CD4-positive, alpha-beta T cell (primary cell): ENCODE measurements at regions of chr20 and their contacts with region 1.

Region 1: GRCh38 chr20:3156811-3157619 is 2.6 kb downstream of the FASTKD5 start:
- DNase-seq: peak in 4 of 14 experiments; percentile 30 to 71 (median 61)
- ATAC-seq: peak; percentile 85
- H3K4me3 ChIP-seq: peak overlapping the region; percentile 97
- H3K4me3 Mint-ChIP-seq: peak overlapping the region; percentile 87
- H3K27ac ChIP-seq: peak overlapping the region; percentile 47 to 48
- H3K27ac Mint-ChIP-seq: peak overlapping the region; percentile 94
- H3K4me1 ChIP-seq: peaks cover 46% of the 10 kb centered on the region
- H3K4me1 Mint-ChIP-seq: peaks cover 75% of the 10 kb centered on the region
- H3K27me3 ChIP-seq: no peaks in the 10 kb centered on the region
- H3K27me3 Mint-ChIP-seq: no peaks in the 10 kb centered on the region
- CTCF ChIP-seq: no peak

Region 2: GRCh38 chr20:2911200-2911599 is 245.8 kb before region 1 on chr20:
- CTCF ChIA-PET with region 1: no interaction called
- POLR2A ChIA-PET with region 1: no interaction called
- intact Hi-C with region 1: no loop called
- DNase-seq: no peak
- ATAC-seq: no peak
- H3K4me3 ChIP-seq: no peak overlapping the region
- H3K4me3 Mint-ChIP-seq: no peak overlapping the region
- H3K27ac ChIP-seq: no peak overlapping the region
- H3K27ac Mint-ChIP-seq: no peak overlapping the region
- H3K4me1 ChIP-seq: no peaks in the 10 kb centered on the region
- H3K4me1 Mint-ChIP-seq: peaks cover 22% of the 10 kb centered on the region
- H3K27me3 ChIP-seq: no peaks in the 10 kb centered on the region
- H3K27me3 Mint-ChIP-seq: no peaks in the 10 kb centered on the region
- CTCF ChIP-seq: no peak

Region 3: GRCh38 chr20:3082306-3082951 is 74.6 kb before region 1 on chr20:
- CTCF ChIA-PET with region 1: no interaction called
- POLR2A ChIA-PET with region 1: interaction called, 13 read pairs
- intact Hi-C with region 1: loop called in 1 of 2 experiments (anchors 5 kb)
- DNase-seq: peak in 3 of 14 experiments; percentile 28 to 44 (median 34)
- ATAC-seq: peak; percentile 62
- H3K4me3 ChIP-seq: peak overlapping the region; percentile 30
- H3K4me3 Mint-ChIP-seq: peak overlapping the region; percentile 78
- H3K27ac ChIP-seq: no peak overlapping the region
- H3K27ac Mint-ChIP-seq: no peak overlapping the region
- H3K4me1 ChIP-seq: peaks cover 18% of the 10 kb centered on the region
- H3K4me1 Mint-ChIP-seq: peaks cover 18% of the 10 kb centered on the region
- H3K27me3 ChIP-seq: peaks cover 26 to 32% of the 10 kb centered on the region in 2 experiments
- H3K27me3 Mint-ChIP-seq: peaks cover 45% of the 10 kb centered on the region
- CTCF ChIP-seq: no peak

Region 4: GRCh38 chr20:3121271-3121911 is 35.6 kb before region 1 on chr20:
- CTCF ChIA-PET with region 1: interaction called, 8 read pairs
- POLR2A ChIA-PET with region 1: interaction called, 8 read pairs
- intact Hi-C with region 1: loop called (anchors 2 to 5 kb)
- DNase-seq: peak in 13 of 14 experiments; percentile 18 to 74 (median 36)
- ATAC-seq: peak; percentile 72
- H3K4me3 ChIP-seq: peak overlapping the region; percentile 2
- H3K4me3 Mint-ChIP-seq: peak overlapping the region; percentile 83
- H3K27ac ChIP-seq: peak overlapping the region; percentile 68 to 70
- H3K27ac Mint-ChIP-seq: peak overlapping the region; percentile 99
- H3K4me1 ChIP-seq: peaks cover 42% of the 10 kb centered on the region
- H3K4me1 Mint-ChIP-seq: peaks cover 50% of the 10 kb centered on the region
- H3K27me3 ChIP-seq: no peaks in the 10 kb centered on the region
- H3K27me3 Mint-ChIP-seq: no peaks in the 10 kb centered on the region
- CTCF ChIP-seq: no peak

Region 5: DNA sequence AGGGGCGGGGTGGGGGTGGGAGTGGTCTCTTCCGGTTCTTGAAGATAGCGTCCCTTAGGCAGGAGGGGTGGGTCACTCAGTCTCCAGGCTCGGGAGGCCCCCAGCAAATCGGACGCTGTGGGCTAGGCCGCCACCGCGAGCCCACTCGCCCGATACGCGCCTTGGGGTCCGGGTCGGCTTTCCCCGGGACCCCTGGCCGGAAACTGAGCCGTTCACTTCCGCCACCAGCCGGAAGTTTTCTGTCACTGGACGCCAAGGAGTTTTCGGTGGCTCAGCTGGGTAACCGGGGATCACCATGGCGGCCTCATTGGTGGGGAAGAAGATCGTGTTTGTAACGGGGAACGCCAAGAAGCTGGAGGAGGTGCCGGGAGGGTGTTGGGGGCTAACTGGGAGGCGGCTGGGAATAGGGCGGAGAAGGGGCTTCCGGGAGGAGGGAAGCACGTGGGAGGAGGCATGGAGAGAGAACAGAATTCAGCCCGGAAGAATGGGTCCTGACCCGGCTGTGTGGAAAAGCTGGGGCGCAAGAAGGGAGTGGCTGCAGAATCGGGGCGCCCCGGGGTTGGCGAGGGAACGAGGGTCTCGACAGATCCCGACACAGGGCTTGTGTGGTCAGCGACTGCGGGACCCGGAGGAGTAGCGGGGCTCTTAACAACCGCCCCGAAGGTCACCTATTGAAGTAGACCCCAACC is 52.4 kb after region 1 on chr20 and contains the start of gene ITPA:
- CTCF ChIA-PET with region 1: no interaction called
- POLR2A ChIA-PET with region 1: interaction called, 12 read pairs
- intact Hi-C with region 1: loop called in 1 of 2 experiments (anchors 5 kb)
- DNase-seq: peak; percentile 27 to 74 (median 50)
- ATAC-seq: peak; percentile 25
- H3K4me3 ChIP-seq: peak within 1 kb of the TSS; percentile 99
- H3K4me3 Mint-ChIP-seq: peak within 1 kb of the TSS; percentile 96
- H3K27ac ChIP-seq: peak within 1 kb of the TSS; percentile 73 to 89
- H3K27ac Mint-ChIP-seq: peak within 1 kb of the TSS; percentile 83
- H3K4me1 ChIP-seq: peaks cover 32% of the 10 kb centered on the region
- H3K4me1 Mint-ChIP-seq: peaks cover 30% of the 10 kb centered on the region
- H3K27me3 ChIP-seq: no peaks in the 10 kb centered on the region
- H3K27me3 Mint-ChIP-seq: no peaks in the 10 kb centered on the region
- CTCF ChIP-seq: no peak
- total RNA-seq, gene ITPA: 17.8 to 19.5 TPM

Region 6: DNA sequence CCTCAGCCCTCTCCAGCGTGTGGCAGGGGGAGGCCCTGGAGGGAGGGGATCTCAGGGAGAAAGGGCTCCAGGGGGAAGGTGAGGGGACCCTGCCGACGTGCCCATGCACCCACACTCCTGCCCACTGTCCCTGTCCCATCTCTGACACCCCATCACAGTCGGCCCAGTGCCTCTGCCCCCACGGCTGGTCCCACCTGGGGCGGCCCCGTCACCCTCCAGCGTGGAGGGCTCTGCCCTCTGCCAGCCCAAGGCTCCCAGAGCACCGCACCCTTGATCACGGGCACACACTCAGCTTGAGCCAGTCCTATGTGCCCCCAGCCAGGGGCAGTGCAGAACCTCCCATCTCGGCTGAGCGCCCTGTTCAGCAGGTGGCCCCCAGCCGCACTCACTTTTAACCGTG is 72.8 kb after region 1 on chr20:
- CTCF ChIA-PET with region 1: no interaction called
- POLR2A ChIA-PET with region 1: no interaction called
- intact Hi-C with region 1: no loop called
- DNase-seq: no peak
- ATAC-seq: no peak
- H3K4me3 ChIP-seq: no peak overlapping the region
- H3K4me3 Mint-ChIP-seq: no peak overlapping the region
- H3K27ac ChIP-seq: no peak overlapping the region
- H3K27ac Mint-ChIP-seq: no peak overlapping the region
- H3K4me1 ChIP-seq: no peaks in the 10 kb centered on the region
- H3K4me1 Mint-ChIP-seq: peaks cover 1% of the 10 kb centered on the region
- H3K27me3 ChIP-seq: peaks cover 0 to 3% of the 10 kb centered on the region in 2 experiments
- H3K27me3 Mint-ChIP-seq: peaks cover 2% of the 10 kb centered on the region
- CTCF ChIP-seq: no peak